ENCODE measurements at regions of chr11 and their contacts with region 1.

Region 1: GRCh38 chr11:75706260-75706729 is 11.3 kb upstream of the MOGAT2 start:
- DNase-seq: peak; percentile 66 to 80
- ATAC-seq: peak; percentile 82 to 97 (median 94)
- H3K4me3 ChIP-seq: peak overlapping the region in 1 of 10 donors; percentile 14
- H3K27ac ChIP-seq: no peak overlapping the region
- H3K4me1 ChIP-seq: peaks cover 0 to 8% (median 4%) of the 10 kb centered on the region in 9 donors
- H3K27me3 ChIP-seq: no peaks in the 10 kb centered on the region
- CTCF ChIP-seq: peak in 8 of 9 donors; percentile 93 to 98 (median 95)

Region 2: GRCh38 chr11:75615706-75616105 is 90.6 kb before region 1 on chr11:
- intact Hi-C with region 1: no loop called
- DNase-seq: no peak
- ATAC-seq: no peak
- H3K4me3 ChIP-seq: no peak overlapping the region
- H3K27ac ChIP-seq: no peak overlapping the region
- H3K4me1 ChIP-seq: peaks cover 0 to 10% (median 0%) of the 10 kb centered on the region in 9 donors
- H3K27me3 ChIP-seq: no peaks in the 10 kb centered on the region
- CTCF ChIP-seq: no peak

Region 3: DNA sequence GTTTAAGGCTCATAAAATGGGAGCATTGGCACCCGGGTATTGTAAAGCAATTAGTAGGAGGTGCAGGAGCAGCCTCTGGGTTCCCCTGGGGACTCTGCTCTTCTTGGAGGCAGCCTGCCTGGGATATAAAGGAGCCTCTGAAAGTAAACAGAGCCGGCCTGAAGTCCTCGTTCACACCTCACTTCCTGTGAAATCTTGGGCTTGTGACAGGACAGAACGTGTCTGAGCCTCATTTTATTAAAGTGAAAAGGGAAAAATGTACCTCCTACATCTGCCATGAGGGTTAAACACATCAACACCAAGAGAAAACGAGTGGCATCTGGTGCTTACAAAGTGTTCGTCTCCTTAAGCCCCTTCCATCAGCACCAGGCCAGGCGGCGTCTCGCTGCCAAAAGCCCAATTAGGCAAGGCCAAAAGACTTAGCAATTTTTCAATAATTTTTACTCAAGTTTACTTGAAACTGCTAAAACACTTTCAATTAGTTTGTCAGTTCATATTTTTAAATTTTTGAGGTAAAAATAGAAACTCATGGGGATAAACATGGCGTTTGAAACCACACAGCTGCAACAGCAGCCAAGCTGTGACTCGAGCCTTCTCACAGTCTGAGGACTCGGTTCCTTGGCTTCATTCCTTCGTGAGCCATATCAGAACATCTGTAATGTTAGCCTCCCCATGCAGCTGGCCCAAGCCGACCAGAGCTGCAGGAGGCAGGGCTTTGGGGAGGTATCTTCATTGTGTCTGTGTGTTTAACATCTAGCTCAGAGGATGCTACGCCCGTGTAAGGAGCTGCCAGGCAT is 71.0 kb before region 1 on chr11:
- intact Hi-C with region 1: no loop called
- DNase-seq: peak; percentile 14 to 29
- ATAC-seq: peak in 6 of 8 donors; percentile 45 to 64 (median 59)
- H3K4me3 ChIP-seq: peak overlapping the region in 1 of 10 donors; percentile 4
- H3K27ac ChIP-seq: peak overlapping the region in 8 of 10 donors; percentile 16 to 74 (median 60)
- H3K4me1 ChIP-seq: peaks cover 0 to 31% (median 11%) of the 10 kb centered on the region in 9 donors
- H3K27me3 ChIP-seq: no peaks in the 10 kb centered on the region
- CTCF ChIP-seq: no peak

Region 4: DNA sequence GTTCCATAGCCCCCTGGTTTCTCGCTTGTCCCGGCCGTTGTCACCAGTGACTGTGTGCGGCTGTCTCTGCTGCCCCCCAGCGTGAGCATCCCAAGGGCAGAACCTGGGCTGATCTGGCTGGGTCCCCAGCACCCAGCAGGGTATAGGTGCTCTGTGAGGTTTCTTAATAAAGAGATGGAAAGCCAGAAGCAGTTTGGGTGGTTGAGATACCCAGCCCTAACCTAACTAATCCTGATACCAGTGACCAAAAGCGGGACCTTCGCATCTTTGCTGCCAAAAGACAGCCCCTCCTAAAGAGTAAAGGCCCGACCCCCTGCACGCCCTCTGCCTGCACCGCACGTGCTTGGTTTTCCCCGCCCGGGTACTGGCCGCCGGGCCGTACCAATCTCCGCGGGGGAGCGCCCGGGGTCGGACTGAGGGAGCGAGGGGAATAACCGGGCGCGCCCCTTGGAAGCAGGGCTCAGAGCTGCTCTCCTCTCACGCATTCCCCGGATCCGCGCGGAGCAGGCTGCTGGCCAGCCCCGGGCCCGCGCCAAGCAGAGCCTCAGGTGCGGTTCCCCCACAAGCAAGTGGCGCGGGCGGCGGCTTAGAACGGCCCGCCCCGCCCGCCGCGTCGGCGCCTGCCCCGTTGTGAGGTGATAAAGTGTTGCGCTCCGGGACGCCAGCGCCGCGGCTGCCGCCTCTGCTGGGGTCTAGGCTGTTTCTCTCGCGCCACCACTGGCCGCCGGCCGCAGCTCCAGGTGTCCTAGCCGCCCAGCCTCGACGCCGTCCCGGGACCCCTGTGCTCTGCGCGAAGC is 62.0 kb after region 1 on chr11 and contains the start of gene DGAT2:
- intact Hi-C with region 1: loop called in 5 of 10 experiments (anchors 1 to 10 kb)
- DNase-seq: peak; percentile 70 to 79
- ATAC-seq: peak; percentile 88 to 93 (median 92)
- H3K4me3 ChIP-seq: peak within 1 kb of the TSS; percentile 33 to 68 (median 55)
- H3K27ac ChIP-seq: peak within 1 kb of the TSS in 8 of 10 donors; percentile 23 to 87 (median 58)
- H3K4me1 ChIP-seq: peaks cover 7 to 52% (median 16%) of the 10 kb centered on the region in 9 donors
- H3K27me3 ChIP-seq: peaks cover 0 to 30% (median 22%) of the 10 kb centered on the region in 7 donors
- CTCF ChIP-seq: peak in 8 of 9 donors; percentile 11 to 50 (median 32)
- total RNA-seq, gene DGAT2: 6.2 to 24.4 (median 10.3) TPM

Region 5: GRCh38 chr11:75867775-75868374 is 161.6 kb after region 1 on chr11:
- intact Hi-C with region 1: loop called in 3 of 10 experiments (anchors 5 to 10 kb)
- DNase-seq: peak in 1 of 2 donors; percentile 58
- ATAC-seq: peak; percentile 55 to 80 (median 68)
- H3K4me3 ChIP-seq: no peak overlapping the region
- H3K27ac ChIP-seq: no peak overlapping the region
- H3K4me1 ChIP-seq: peaks cover 5 to 34% (median 23%) of the 10 kb centered on the region in 9 donors
- H3K27me3 ChIP-seq: no peaks in the 10 kb centered on the region
- CTCF ChIP-seq: peak; percentile 72 to 89 (median 85)